ENCODE measurements at regions of chr19 and their contacts with region 1.

Region 1: GRCh38 chr19:30255791-30256495 is 116.2 kb upstream of the ZNF536 start:
- DNase-seq: no peak
- H3K4me3 ChIP-seq: no peak overlapping the region
- H3K27ac ChIP-seq: no peak overlapping the region
- H3K4me1 ChIP-seq: no peaks in the 10 kb centered on the region
- H3K27me3 ChIP-seq: no peaks in the 10 kb centered on the region
- CTCF ChIP-seq: no peak
- EP300 ChIP-seq: no peak
- POLR2A ChIP-seq: no peak

Region 2: DNA sequence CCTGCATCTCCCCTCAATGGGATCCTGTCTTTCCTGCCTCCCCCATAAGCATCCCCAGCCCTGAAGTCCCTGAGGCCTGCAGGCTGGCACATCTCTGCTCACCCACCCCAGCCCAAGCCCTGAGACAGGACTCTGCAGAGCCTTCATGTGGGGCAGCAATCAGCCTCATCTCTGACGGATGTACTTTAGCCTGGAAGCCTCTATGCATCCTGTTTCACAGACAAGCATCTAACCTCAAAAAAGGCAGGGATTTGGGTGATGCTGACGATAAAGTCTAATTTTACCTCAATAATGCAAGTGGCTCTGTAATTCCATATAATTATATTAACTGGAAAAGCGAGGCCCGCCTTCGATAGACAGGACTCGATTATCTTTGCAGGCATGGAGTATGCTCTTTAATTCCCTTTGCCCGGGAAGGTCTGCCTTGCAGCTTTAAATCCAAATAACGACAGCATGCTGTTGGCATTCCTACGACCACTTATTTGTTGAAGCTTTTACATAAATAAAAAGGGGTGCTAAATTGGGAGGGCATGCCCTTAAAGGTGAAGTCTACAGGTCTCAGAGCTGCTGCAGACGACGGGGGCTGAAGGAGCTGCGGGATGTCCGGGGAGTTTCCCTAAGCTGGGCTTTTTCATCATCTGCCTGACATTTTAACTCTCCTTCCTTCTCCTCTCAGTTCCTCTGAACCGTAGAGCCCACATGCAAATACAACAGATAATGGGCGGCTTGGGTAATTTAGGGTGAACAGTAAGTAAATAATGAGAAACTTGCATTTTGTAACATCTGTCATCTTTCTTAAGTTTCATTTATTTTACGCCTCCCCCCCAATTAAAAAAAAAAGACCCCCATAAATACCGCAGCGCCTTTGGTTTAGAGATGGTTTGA is 102.4 kb before region 1 on chr19:
- intact Hi-C with region 1: no loop called
- DNase-seq: no peak
- H3K4me3 ChIP-seq: no peak overlapping the region
- H3K27ac ChIP-seq: no peak overlapping the region
- H3K4me1 ChIP-seq: peaks cover 8% of the 10 kb centered on the region
- H3K27me3 ChIP-seq: no peaks in the 10 kb centered on the region
- CTCF ChIP-seq: no peak
- EP300 ChIP-seq: no peak
- POLR2A ChIP-seq: no peak

Region 3: DNA sequence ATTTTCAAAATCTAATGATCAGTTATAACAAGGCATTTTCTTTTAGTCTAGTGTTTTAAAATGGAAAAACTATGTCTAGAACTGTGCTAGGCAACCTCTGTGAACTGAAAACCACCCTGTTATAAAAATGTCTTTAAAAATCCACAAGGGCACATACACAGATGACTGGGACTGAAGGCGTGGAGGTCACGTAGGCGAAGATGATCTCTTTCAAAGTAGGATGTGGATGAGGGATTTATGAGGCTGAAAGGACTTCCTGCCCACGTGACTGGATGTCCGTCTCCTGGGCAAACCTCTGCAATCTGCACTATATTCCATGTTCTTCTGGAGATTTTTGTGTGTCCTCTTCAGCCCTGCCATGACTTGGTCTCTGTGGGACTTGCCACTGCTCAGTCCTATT is 32.0 kb after region 1 on chr19:
- intact Hi-C with region 1: loop called in 1 of 4 experiments (anchors 2 kb)
- DNase-seq: no peak
- H3K4me3 ChIP-seq: no peak overlapping the region
- H3K27ac ChIP-seq: no peak overlapping the region
- H3K4me1 ChIP-seq: no peaks in the 10 kb centered on the region
- H3K27me3 ChIP-seq: no peaks in the 10 kb centered on the region
- CTCF ChIP-seq: no peak
- EP300 ChIP-seq: no peak
- POLR2A ChIP-seq: no peak

Measured in ovary (tissue), 10 donors.